AG04450 (cell line): ENCODE measurements at regions of chr7 and their contacts with region 1.

Region 1: GRCh38 chr7:7761340-7761980 is 43.1 kb upstream of the RPA3 start:
- DNase-seq: no peak
- H3K4me3 ChIP-seq: no peak overlapping the region
- H3K27ac ChIP-seq: no peak overlapping the region
- H3K27me3 ChIP-seq: no peaks in the 10 kb centered on the region
- CTCF ChIP-seq: peak; percentile 43

Region 2: DNA sequence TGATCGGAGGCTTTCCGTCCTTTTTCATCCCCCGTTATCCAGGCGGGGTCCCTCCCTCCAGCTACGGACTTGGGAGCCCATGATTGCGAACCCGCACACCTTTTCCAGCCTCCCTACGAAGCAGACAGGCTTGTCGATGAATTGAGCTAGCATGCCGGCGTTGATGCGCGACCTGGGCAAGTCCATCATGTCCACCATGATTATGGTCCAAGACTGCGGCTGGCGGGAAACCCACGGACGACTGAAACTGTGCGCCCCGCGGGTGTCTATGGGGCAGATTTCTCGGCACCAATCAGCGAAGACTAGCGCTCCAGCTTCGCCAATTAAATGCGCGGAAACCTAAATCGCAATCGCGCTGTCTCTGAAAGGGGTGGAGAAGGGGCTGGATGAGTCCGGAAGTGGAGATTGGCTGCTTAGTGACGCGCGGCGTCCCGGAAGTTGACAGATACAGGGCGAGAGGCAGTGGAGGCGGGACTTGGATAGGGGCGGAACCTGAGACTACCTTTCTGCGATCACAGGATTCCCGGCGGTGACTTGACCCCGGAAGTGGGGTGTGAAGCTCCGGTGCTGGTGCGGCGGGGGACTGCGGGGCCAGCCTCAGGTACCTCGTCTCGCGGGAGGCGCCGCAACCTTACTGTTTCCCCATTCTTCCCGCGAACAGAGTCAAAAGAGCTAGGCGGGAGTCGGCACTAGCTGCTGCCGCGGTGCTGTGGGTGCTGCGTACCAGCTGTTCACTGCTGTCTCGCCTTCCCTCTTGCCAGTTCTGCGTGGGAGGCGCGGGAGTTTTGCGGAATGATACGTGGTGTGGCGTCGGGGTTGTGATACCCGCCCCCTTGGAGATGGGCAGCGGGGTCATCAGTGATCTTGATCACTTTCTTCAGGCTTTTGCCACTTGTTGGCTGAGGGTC is 121.0 kb before region 1 on chr7 and contains the start of gene UMAD1:
- CTCF ChIA-PET with region 1: interaction called, 19 read pairs
- POLR2A ChIA-PET with region 1: no interaction called
- DNase-seq: peak; percentile 95
- H3K4me3 ChIP-seq: peak within 1 kb of the TSS; percentile 100
- H3K27ac ChIP-seq: peak within 1 kb of the TSS; percentile 78
- H3K27me3 ChIP-seq: no peaks in the 10 kb centered on the region
- CTCF ChIP-seq: no peak
- polyA plus RNA-seq, gene UMAD1: 16.5 and 22.8 TPM in 2 replicates

Region 3: GRCh38 chr7:7772397-7772821 is 10.9 kb after region 1 on chr7:
- CTCF ChIA-PET with region 1: interaction called, 13 read pairs
- POLR2A ChIA-PET with region 1: no interaction called
- DNase-seq: no peak
- H3K4me3 ChIP-seq: peak overlapping the region; percentile 21
- H3K27ac ChIP-seq: no peak overlapping the region
- H3K27me3 ChIP-seq: no peaks in the 10 kb centered on the region
- CTCF ChIP-seq: no peak